WTC11 (cell line): ENCODE measurements at regions of chr19 and their contacts with region 1.

Region 1: GRCh38 chr19:5803752-5804515 is 933 bp upstream of the NRTN start:
- DNase-seq: peak; percentile 99
- ATAC-seq: peak; percentile 85
- H3K4me3 Mint-ChIP-seq: peak overlapping the region; percentile 75
- H3K27ac Mint-ChIP-seq: no peak overlapping the region
- H3K4me1 Mint-ChIP-seq: peaks cover 13% of the 10 kb centered on the region
- H3K27me3 Mint-ChIP-seq: peaks cover 47% of the 10 kb centered on the region
- CTCF ChIP-seq: peak; percentile 86; the same call in 1 of the 2 replicates

Region 2: GRCh38 chr19:5665796-5666513 is 138.0 kb before region 1 on chr19:
- CTCF ChIA-PET with region 1: no interaction called
- POLR2A ChIA-PET with region 1: no interaction called
- DNase-seq: no peak
- ATAC-seq: no peak
- H3K4me3 Mint-ChIP-seq: no peak overlapping the region
- H3K27ac Mint-ChIP-seq: no peak overlapping the region
- H3K4me1 Mint-ChIP-seq: peaks cover 11% of the 10 kb centered on the region
- H3K27me3 Mint-ChIP-seq: no peaks in the 10 kb centered on the region
- CTCF ChIP-seq: no peak

Region 3: GRCh38 chr19:5790573-5791520 is 13.1 kb before region 1 on chr19 and contains the start of gene DUS3L:
- CTCF ChIA-PET with region 1: interaction called, 36 read pairs
- POLR2A ChIA-PET with region 1: interaction called, 4 read pairs
- DNase-seq: peak; percentile 96
- ATAC-seq: peak; percentile 96
- H3K4me3 Mint-ChIP-seq: peak within 1 kb of the TSS; percentile 98
- H3K27ac Mint-ChIP-seq: peak within 1 kb of the TSS; percentile 100
- H3K4me1 Mint-ChIP-seq: peaks cover 5% of the 10 kb centered on the region
- H3K27me3 Mint-ChIP-seq: no peaks in the 10 kb centered on the region; the same call in 1 of the 2 replicates
- CTCF ChIP-seq: no peak
- total RNA-seq, gene DUS3L: 30.6 to 39.3 TPM (median 34.6 TPM) in 3 replicates

Region 4: DNA sequence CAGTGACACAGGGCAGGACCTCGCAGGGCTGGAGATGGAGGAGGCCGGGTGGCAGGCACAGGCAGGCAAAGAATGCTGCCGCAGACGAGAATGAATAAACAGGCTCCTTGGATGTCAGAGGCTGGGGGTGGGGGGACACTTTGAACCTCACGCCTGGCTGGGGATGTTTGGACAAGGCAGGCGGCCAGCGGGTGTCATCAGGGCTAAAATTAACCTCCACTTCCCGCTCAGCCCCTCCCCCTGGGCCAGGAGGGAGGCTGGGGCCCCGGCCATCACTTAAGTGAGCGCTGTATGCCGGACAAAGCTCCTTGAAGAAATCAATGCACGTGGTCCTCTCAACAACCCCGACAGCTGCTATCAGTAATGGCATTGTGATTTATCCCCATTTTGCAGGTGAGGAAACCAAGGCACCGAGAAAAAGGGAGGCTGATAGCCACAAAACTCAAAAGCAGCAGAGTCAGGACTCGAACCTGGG is 76.7 kb after region 1 on chr19:
- CTCF ChIA-PET with region 1: interaction called, 21 read pairs
- POLR2A ChIA-PET with region 1: no interaction called
- DNase-seq: peak; percentile 29
- ATAC-seq: peak; percentile 46
- H3K4me3 Mint-ChIP-seq: no peak overlapping the region
- H3K27ac Mint-ChIP-seq: no peak overlapping the region
- H3K4me1 Mint-ChIP-seq: peaks cover 11% of the 10 kb centered on the region
- H3K27me3 Mint-ChIP-seq: peaks cover 18% of the 10 kb centered on the region
- CTCF ChIP-seq: no peak

Region 5: DNA sequence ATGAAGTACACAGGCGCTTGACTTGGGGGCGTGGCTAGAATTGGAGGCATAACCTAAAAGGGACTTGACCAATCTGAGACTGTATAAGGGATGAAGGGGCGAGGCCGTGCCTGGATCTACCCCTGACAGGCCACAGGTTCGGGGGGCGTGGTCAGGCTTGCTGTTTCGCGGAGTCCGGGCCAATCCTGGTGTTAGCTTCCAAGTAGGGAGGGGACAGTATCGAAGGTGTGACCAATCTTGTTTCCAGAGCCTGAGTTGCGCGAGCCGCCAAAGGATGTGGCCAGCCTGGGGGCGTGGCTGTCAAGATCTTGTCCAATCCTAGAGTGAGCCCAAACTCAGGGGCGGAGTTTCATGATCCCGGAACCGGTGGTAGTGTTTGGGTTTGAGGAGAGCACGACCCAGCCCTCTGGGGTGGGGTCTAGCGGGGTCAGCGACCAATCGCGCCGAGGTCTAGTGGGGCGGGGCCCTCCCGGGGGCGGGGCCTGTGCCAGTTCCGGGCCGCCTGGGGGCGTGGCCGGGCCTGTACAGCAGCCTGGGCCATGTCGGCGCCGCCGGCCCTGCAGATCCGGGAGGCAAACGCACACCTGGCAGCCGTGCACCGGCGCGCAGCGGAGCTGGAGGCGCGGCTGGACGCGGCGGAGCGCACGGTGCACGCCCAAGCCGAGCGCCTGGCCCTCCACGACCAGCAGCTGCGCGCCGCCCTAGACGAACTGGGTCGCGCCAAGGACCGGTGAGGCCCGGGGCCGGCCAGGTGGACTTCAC is 100.6 kb after region 1 on chr19 and contains the start of gene VMAC:
- CTCF ChIA-PET with region 1: interaction called, 83 read pairs
- POLR2A ChIA-PET with region 1: interaction called, 4 read pairs
- DNase-seq: peak; percentile 100
- ATAC-seq: peak; percentile 89
- H3K4me3 Mint-ChIP-seq: peak within 1 kb of the TSS; percentile 93
- H3K27ac Mint-ChIP-seq: peak within 1 kb of the TSS; percentile 99
- H3K4me1 Mint-ChIP-seq: peaks cover 4% of the 10 kb centered on the region
- H3K27me3 Mint-ChIP-seq: no peaks in the 10 kb centered on the region
- CTCF ChIP-seq: no peak
- total RNA-seq, gene VMAC: 2.5 to 3.3 TPM (median 3.3 TPM) in 3 replicates

Region 6: GRCh38 chr19:5967994-5968430 is 164.1 kb after region 1 on chr19:
- CTCF ChIA-PET with region 1: interaction called, 23 read pairs
- POLR2A ChIA-PET with region 1: no interaction called
- DNase-seq: peak; percentile 77
- ATAC-seq: peak; percentile 70
- H3K4me3 Mint-ChIP-seq: peak overlapping the region; percentile 18
- H3K27ac Mint-ChIP-seq: peak overlapping the region; percentile 97
- H3K4me1 Mint-ChIP-seq: peaks cover 50% of the 10 kb centered on the region
- H3K27me3 Mint-ChIP-seq: no peaks in the 10 kb centered on the region
- CTCF ChIP-seq: peak; percentile 63

Region 7: DNA sequence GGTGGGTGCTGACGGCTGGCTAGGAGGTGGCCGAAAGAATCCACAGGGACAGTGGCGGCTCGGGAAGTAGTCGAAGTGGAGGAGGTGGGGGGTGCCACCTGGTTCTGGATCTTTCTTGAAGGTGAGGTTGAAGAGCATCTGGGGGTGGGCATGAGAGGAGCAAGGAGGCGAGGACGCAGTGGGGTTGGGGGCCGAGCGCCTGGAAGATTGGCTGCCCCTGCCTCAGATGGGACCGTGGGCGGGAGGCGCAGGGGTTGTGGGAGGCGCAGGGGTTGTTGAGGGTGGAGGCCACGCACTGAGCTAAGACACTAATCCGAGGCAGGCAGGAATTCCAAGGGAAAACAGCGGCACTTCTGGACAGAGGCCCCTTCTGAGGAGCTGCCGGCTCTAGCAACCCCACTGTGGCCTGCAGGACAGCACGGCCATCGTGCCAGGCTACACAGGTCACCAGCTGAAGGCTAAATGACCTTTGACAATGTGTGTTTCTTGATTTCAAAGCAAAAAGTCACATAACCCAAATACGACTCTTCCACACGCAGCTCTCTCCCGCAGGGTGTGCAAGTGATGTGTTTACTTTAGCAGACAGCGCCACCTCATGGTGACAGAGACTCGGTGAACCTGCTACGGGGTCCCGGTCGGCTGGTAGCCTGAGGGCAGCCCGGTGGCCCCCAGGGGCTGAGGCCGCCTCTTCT is 218.1 kb after region 1 on chr19:
- CTCF ChIA-PET with region 1: interaction called, 79 read pairs
- POLR2A ChIA-PET with region 1: interaction called, 4 read pairs
- DNase-seq: peak; percentile 93
- ATAC-seq: peak; percentile 89
- H3K4me3 Mint-ChIP-seq: no peak overlapping the region
- H3K27ac Mint-ChIP-seq: no peak overlapping the region
- H3K4me1 Mint-ChIP-seq: 0 out of 2 replicates have a peak, but pooled peaks cover 6% of the 10 kb centered on the region
- H3K27me3 Mint-ChIP-seq: peaks cover 12% of the 10 kb centered on the region
- CTCF ChIP-seq: peak; percentile 80